ENCODE measurements at regions of chr14 and their contacts with region 1.

Region 1: DNA sequence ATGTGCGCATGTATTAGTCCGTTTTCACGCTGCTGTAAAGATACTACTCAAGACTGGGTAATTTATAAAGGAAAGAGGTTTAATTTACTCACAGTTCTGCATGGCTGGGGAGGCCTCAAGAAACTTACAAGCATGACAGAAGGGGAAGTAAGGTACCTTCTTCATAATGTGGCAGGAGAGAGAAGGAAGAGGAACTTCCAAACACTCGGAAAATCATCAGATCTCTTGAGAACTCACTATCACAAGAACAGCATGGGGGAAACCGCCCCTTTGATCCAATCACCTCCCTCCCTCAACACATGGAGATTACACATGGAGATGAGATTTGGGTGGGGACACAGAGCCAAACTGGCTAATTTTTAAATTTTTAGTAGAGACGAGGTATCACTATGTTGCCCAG is 41.8 kb upstream of the SNX6 start:
- DNase-seq: no peak
- ATAC-seq: no peak
- H3K4me3 ChIP-seq: no peak overlapping the region
- H3K27ac ChIP-seq: no peak overlapping the region
- H3K4me1 ChIP-seq: no peaks in the 10 kb centered on the region
- H3K27me3 ChIP-seq: no peaks in the 10 kb centered on the region

Region 2: DNA sequence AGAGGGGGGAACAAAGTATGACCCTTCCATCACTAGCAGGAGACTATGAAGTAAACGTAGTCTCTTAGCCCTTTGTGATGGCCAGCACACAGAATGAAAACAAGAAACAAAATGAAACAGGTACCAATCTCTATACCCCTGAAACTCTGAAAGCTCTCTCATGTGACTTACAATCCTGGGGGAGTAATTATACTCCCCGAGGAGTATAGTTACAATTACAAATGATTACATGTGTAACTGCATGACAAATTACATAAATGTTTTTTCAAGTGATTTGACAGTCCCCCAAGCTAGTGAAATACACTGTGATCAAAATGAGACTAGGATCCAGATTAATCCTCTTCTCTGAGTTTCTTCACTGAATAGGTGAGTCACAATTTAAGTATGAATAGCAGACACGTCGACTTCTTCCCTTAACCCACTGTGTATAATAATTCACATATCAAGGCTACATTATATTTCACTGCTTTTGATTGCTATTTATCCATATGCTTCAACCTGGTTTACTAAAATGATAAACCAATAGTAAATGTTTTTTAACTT is 283.7 kb before region 1 on chr14:
- intact Hi-C with region 1: no loop called
- DNase-seq: no peak
- ATAC-seq: no peak
- H3K4me3 ChIP-seq: no peak overlapping the region
- H3K27ac ChIP-seq: no peak overlapping the region
- H3K4me1 ChIP-seq: no peaks in the 10 kb centered on the region
- H3K27me3 ChIP-seq: no peaks in the 10 kb centered on the region

Region 3: GRCh38 chr14:34538871-34539406 is 132.8 kb before region 1 on chr14:
- intact Hi-C with region 1: no loop called
- DNase-seq: no peak
- ATAC-seq: no peak
- H3K4me3 ChIP-seq: peak overlapping the region; percentile 84 to 90
- H3K27ac ChIP-seq: peak overlapping the region; percentile 71 to 93
- H3K4me1 ChIP-seq: peaks cover 3 to 4% of the 10 kb centered on the region in 2 donors
- H3K27me3 ChIP-seq: no peaks in the 10 kb centered on the region

Region 4: GRCh38 chr14:34722717-34723545 is 51.2 kb after region 1 on chr14:
- intact Hi-C with region 1: loop called (anchors 2 kb)
- DNase-seq: no peak
- ATAC-seq: peak; percentile 83
- H3K4me3 ChIP-seq: no peak overlapping the region
- H3K27ac ChIP-seq: no peak overlapping the region
- H3K4me1 ChIP-seq: no peaks in the 10 kb centered on the region
- H3K27me3 ChIP-seq: no peaks in the 10 kb centered on the region